ENCODE measurements at regions of chr2 and their contacts with region 1.

Region 1: DNA sequence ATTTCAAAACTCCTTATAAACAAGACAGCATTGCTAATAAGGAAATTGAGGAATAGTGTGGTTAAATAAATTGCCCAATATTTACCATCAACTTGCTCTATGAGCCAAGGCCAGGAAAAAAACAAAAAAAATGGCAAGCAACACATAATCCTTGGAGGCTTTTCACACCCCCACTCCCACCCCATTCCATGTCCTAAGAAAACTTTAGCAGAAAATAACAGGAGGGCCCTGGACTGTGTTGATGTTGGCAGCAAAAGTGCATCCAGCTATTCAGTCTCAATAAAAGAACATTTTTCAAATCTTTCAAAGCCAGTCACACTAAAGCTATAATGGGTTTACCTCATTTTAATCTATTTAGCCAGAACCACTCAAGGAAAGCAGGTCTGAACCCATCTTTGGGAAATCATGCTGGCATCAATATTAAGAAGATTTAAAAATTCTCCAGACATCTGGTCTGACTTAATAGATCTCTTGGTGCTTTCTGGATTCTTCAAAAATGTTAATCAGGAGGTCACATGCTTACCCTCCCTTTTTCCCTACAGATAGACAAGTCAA is 34.6 kb upstream of the STK17B start:
- DNase-seq: no peak
- ATAC-seq: no peak
- H3K4me3 ChIP-seq: no peak overlapping the region
- H3K4me3 Mint-ChIP-seq: no peak overlapping the region
- H3K27ac ChIP-seq: no peak overlapping the region
- H3K27ac Mint-ChIP-seq: peak overlapping the region in 1 of 2 donors; percentile 36
- H3K4me1 ChIP-seq: peaks cover 27% of the 10 kb centered on the region in 2 experiments
- H3K4me1 Mint-ChIP-seq: peaks cover 50 to 66% (median 61%) of the 10 kb centered on the region in 3 donors
- H3K27me3 ChIP-seq: no peaks in the 10 kb centered on the region
- H3K27me3 Mint-ChIP-seq: no peaks in the 10 kb centered on the region

Region 2: DNA sequence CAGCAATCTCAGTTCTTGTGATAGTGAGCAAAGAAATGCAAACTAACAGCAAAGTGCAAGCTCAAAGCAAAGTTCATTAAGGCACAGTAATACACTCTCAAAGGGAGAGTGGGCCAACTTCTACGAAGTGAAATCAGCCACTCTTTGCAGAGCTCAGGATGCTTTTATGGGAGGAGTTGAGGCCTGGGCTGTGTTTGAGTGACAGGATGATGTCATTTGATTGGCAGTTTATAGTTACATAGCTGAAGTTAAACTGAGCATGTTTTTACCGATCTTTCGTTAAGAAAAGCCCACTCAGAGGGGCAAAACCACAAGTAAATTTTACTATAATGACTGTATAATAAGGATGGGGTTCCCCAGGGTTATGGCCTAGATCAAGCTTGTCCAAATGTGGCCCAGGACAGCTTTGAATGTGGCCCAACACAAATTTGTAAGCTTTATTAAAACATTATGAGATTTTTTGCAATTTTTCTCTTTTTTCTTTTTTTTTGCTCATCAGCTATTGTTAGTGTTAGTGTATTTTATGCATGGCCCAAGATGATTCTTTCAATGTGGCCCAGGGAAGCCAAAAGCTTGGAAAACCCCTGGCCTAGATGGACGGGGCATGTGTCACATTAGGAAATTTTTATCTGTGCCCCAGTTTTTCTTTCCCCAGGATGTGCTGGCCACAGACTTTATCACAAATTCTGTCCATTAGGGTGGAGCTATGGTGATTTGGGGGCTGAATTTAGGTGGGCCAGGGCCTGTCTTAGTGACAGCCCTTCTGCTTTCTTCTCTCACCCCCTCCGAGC is 129.0 kb before region 1 on chr2:
- CTCF ChIA-PET with region 1: no interaction called
- POLR2A ChIA-PET with region 1: no interaction called
- DNase-seq: no peak
- ATAC-seq: no peak
- H3K4me3 ChIP-seq: no peak overlapping the region
- H3K4me3 Mint-ChIP-seq: no peak overlapping the region
- H3K27ac ChIP-seq: no peak overlapping the region
- H3K27ac Mint-ChIP-seq: no peak overlapping the region
- H3K4me1 ChIP-seq: peaks cover 0 to 4% of the 10 kb centered on the region in 2 experiments
- H3K4me1 Mint-ChIP-seq: peaks cover 24 to 28% (median 27%) of the 10 kb centered on the region in 3 donors
- H3K27me3 ChIP-seq: no peaks in the 10 kb centered on the region
- H3K27me3 Mint-ChIP-seq: no peaks in the 10 kb centered on the region

Region 3: GRCh38 chr2:196113061-196113974 is 92.6 kb before region 1 on chr2:
- CTCF ChIA-PET with region 1: no interaction called
- POLR2A ChIA-PET with region 1: no interaction called
- DNase-seq: no peak
- ATAC-seq: no peak
- H3K4me3 ChIP-seq: no peak overlapping the region
- H3K4me3 Mint-ChIP-seq: peak overlapping the region in 2 of 3 donors; percentile 5 to 9
- H3K27ac ChIP-seq: no peak overlapping the region
- H3K27ac Mint-ChIP-seq: peak overlapping the region; percentile 28 to 39
- H3K4me1 ChIP-seq: peaks cover 0 to 2% of the 10 kb centered on the region in 2 experiments
- H3K4me1 Mint-ChIP-seq: peaks cover 10 to 26% (median 21%) of the 10 kb centered on the region in 3 donors
- H3K27me3 ChIP-seq: no peaks in the 10 kb centered on the region
- H3K27me3 Mint-ChIP-seq: no peaks in the 10 kb centered on the region

Region 4: GRCh38 chr2:196182439-196183171 is 23.4 kb before region 1 on chr2:
- CTCF ChIA-PET with region 1: interaction called in 1 of 2 experiments, 23 read pairs
- POLR2A ChIA-PET with region 1: interaction called, 17 to 20 read pairs
- DNase-seq: peak in 1 of 35 experiments; percentile 63
- ATAC-seq: peak in 3 of 4 experiments; percentile 21 to 33 (median 30)
- H3K4me3 ChIP-seq: no peak overlapping the region
- H3K4me3 Mint-ChIP-seq: peak overlapping the region; percentile 14 to 75 (median 64)
- H3K27ac ChIP-seq: peak overlapping the region; percentile 94
- H3K27ac Mint-ChIP-seq: peak overlapping the region; percentile 93 to 100
- H3K4me1 ChIP-seq: peaks cover 65 to 66% of the 10 kb centered on the region in 2 experiments
- H3K4me1 Mint-ChIP-seq: peaks cover 86 to 91% (median 88%) of the 10 kb centered on the region in 3 donors
- H3K27me3 ChIP-seq: no peaks in the 10 kb centered on the region
- H3K27me3 Mint-ChIP-seq: no peaks in the 10 kb centered on the region

Region 5: GRCh38 chr2:196195302-196195701 is 10.7 kb before region 1 on chr2:
- CTCF ChIA-PET with region 1: interaction called, 4 to 6 read pairs
- POLR2A ChIA-PET with region 1: interaction called in 1 of 2 experiments, 17 read pairs
- DNase-seq: peak in 1 of 35 experiments; percentile 29
- ATAC-seq: peak in 1 of 4 experiments; percentile 30
- H3K4me3 ChIP-seq: no peak overlapping the region
- H3K4me3 Mint-ChIP-seq: peak overlapping the region; percentile 24 to 60 (median 49)
- H3K27ac ChIP-seq: no peak overlapping the region
- H3K27ac Mint-ChIP-seq: peak overlapping the region; percentile 76 to 79
- H3K4me1 ChIP-seq: peaks cover 8 to 18% of the 10 kb centered on the region in 2 experiments
- H3K4me1 Mint-ChIP-seq: peaks cover 52 to 72% (median 64%) of the 10 kb centered on the region in 3 donors
- H3K27me3 ChIP-seq: no peaks in the 10 kb centered on the region
- H3K27me3 Mint-ChIP-seq: no peaks in the 10 kb centered on the region

Region 6: DNA sequence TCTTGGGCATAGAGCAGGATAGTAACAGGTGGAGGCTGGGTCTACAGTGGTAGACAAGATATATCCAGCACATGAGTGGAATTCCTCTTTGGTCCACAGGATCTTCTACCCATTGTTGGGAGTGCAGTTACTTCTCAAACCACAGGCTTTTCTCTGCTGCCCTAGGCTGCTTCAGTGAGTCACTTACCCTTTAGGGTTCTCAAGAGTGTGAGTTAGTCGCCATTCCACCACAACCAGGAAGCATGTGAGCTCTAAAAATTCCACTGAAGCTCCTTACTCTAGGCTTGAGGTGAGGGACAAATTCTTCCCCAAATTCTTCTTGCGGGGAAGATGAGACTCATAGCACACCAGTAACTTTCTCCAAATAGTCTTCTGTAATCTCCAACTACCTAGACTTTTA is 1787.9 kb after region 1 on chr2:
- CTCF ChIA-PET with region 1: no interaction called
- POLR2A ChIA-PET with region 1: no interaction called
- DNase-seq: no peak
- ATAC-seq: peak in 1 of 4 experiments; percentile 12
- H3K4me3 ChIP-seq: no peak overlapping the region
- H3K4me3 Mint-ChIP-seq: no peak overlapping the region
- H3K27ac ChIP-seq: no peak overlapping the region
- H3K27ac Mint-ChIP-seq: no peak overlapping the region
- H3K4me1 ChIP-seq: peaks cover 15 to 28% of the 10 kb centered on the region in 2 experiments
- H3K4me1 Mint-ChIP-seq: peaks cover 54 to 73% (median 62%) of the 10 kb centered on the region in 3 donors
- H3K27me3 ChIP-seq: no peaks in the 10 kb centered on the region
- H3K27me3 Mint-ChIP-seq: no peaks in the 10 kb centered on the region

Measured in T-cell (primary cell).